ENCODE measurements at regions of chr7 and their contacts with region 1.

Region 1: DNA sequence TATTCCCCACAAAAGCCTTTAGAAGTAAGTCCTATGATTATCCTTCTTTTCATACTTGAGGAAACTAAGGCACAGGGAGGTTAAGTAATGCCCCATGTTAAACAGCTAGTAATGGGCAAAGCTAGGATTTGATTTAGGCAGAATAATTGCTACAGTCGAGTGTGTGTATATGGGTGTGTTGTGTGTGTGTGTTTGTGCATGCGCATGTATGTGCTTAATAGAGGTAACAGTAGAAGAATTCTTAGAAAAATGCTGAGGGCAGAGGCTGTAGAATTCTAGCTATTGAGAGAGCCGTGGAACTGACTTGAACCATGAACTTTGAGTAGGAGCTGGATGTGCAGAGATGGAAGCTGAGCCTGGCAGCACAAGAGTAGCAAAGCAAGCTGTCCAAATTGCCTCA is 131.3 kb upstream of the WNT16 start:
- DNase-seq: no peak
- H3K4me3 ChIP-seq: no peak overlapping the region
- H3K4me3 Mint-ChIP-seq: no peak overlapping the region
- H3K27ac ChIP-seq: no peak overlapping the region
- H3K27ac Mint-ChIP-seq: no peak overlapping the region
- H3K4me1 ChIP-seq: no peaks in the 10 kb centered on the region
- H3K4me1 Mint-ChIP-seq: no peaks in the 10 kb centered on the region
- H3K27me3 ChIP-seq: no peaks in the 10 kb centered on the region
- H3K27me3 Mint-ChIP-seq: peaks cover 9 to 10% of the 10 kb centered on the region in 2 donors

Region 2: DNA sequence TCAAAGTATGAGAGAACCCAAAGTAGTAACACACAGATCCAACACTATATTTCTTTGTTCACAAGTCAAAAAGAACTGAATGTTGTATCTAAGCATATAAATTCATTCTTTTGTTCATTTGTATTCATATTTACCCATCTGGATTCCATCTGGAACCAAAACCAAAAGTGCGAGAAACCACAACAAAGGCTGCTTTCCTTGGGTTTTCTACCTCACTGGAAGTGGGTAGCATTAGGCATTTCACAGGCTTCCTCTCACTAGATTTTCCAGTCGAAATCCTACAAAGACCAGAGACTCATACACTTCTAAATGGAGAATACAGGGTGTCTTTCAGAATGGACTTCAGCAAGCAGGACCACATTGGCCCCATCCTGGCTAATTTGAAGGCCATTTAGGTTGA is 21.6 kb after region 1 on chr7:
- CTCF ChIA-PET with region 1: no interaction called
- POLR2A ChIA-PET with region 1: no interaction called
- intact Hi-C with region 1: loop called (anchors 1 kb)
- DNase-seq: no peak
- H3K4me3 ChIP-seq: no peak overlapping the region
- H3K4me3 Mint-ChIP-seq: no peak overlapping the region
- H3K27ac ChIP-seq: no peak overlapping the region
- H3K27ac Mint-ChIP-seq: no peak overlapping the region
- H3K4me1 ChIP-seq: no peaks in the 10 kb centered on the region
- H3K4me1 Mint-ChIP-seq: no peaks in the 10 kb centered on the region
- H3K27me3 ChIP-seq: no peaks in the 10 kb centered on the region
- H3K27me3 Mint-ChIP-seq: peaks cover under 1% of the 10 kb centered on the region in 2 donors

Measured in CD4-positive, alpha-beta memory T cell (primary cell).